ENCODE measurements at regions of chr3 and their contacts with region 1.

Region 1: DNA sequence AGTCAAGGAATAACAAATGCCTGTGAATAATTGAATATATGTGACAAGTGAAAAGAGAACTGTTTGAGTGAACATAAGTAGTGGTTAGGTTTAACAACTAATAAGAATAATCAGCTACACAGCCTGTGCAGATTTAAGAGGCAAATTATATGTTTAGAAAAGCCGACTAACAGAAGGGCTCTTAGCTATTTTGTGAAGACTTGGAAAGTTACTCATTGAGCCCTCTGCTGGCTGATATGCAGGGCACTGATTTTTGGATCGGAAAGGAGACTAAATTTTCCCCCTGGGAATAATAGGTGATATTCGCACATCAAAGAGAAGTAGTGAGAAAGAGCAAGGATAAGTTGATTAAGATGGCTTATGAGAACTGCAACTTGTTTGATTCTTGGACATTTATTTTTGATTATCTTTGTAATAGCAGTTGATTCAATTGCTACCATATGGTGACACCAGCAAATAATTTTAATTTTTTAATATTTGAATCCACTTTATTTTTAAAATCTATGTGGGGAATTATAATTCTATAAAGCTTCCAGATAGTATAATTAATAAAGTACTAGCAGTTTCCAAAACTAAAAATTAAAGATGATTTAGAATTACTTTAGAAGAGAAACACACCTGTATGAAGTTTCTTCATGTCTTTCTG is 156.2 kb downstream of the NLGN1 start:
- DNase-seq: peak; percentile 31
- H3K4me3 Mint-ChIP-seq: no peak overlapping the region
- H3K27ac Mint-ChIP-seq: no peak overlapping the region
- H3K4me1 Mint-ChIP-seq: no peaks in the 10 kb centered on the region
- H3K27me3 Mint-ChIP-seq: no peaks in the 10 kb centered on the region
- CTCF ChIP-seq: peak; percentile 85

Region 2: DNA sequence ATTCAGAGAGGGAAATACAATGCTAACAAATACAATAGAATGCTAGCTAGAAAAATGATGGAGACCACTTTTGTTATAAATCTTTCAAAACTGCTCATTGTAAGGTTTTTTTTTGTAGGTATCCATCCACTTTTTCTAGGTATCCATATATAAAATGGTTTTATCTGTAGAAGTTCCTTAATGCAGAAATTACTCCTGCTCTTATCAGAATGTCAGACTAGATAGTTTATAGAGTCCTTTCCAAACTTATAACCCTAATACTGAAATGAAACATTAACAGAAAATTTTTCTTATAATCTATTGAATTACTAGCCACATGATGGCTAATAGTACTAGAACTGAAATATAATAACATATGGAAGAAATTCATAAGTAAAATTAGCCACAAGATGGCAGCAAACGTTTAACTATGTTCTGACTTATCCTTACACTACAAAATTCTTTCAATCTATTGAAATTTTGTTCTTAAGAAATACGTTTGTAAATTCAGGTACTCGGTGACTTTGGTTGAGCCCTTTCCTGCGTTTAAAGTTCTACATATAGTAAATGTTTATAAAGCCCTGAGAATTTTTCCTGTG is 744.7 kb before region 1 on chr3:
- CTCF ChIA-PET with region 1: no interaction called
- intact Hi-C with region 1: loop called (anchors 2 kb)
- DNase-seq: no peak
- H3K4me3 Mint-ChIP-seq: no peak overlapping the region
- H3K27ac Mint-ChIP-seq: no peak overlapping the region
- H3K4me1 Mint-ChIP-seq: no peaks in the 10 kb centered on the region
- H3K27me3 Mint-ChIP-seq: no peaks in the 10 kb centered on the region
- CTCF ChIP-seq: peak; percentile 39

Region 3: GRCh38 chr3:173221010-173221409 is 332.7 kb before region 1 on chr3:
- CTCF ChIA-PET with region 1: no interaction called
- intact Hi-C with region 1: loop called (anchors 1 kb)
- DNase-seq: peak; percentile 32
- H3K4me3 Mint-ChIP-seq: no peak overlapping the region
- H3K27ac Mint-ChIP-seq: no peak overlapping the region
- H3K4me1 Mint-ChIP-seq: peaks cover 11% of the 10 kb centered on the region
- H3K27me3 Mint-ChIP-seq: no peaks in the 10 kb centered on the region
- CTCF ChIP-seq: peak; percentile 85

Region 4: DNA sequence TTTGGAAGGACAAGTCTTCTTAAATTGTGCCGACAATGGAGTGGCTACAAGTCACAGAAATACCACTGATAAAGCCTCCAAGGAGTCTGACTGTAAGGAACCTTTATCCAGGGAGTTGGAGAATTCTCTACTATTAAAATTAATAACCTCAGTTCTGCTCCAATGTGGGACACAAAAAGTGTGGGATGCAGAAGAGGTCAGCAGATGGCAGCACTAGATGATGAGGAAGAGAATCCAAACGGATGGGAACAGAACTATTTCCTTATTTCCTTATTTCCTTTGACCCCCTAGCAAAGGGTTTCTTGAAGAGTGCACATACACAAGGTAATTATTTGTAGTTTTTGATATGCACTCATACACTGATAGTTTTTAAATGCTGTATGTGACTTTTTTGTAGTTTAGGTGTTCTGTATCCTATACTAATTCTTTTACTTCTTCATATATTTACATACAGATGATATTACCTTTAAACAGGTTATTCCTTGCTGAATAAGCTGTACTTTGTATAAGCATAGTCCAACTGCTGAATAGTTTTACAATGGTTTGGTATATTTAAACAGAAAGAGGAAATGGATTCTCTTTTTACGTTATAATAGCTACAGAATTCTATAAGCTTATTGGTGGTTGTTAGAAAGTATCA is 181.8 kb before region 1 on chr3:
- CTCF ChIA-PET with region 1: interaction called, 3 read pairs
- intact Hi-C with region 1: loop called (anchors 1 kb)
- DNase-seq: peak; percentile 66
- H3K4me3 Mint-ChIP-seq: no peak overlapping the region
- H3K27ac Mint-ChIP-seq: no peak overlapping the region
- H3K4me1 Mint-ChIP-seq: no peaks in the 10 kb centered on the region
- H3K27me3 Mint-ChIP-seq: no peaks in the 10 kb centered on the region
- CTCF ChIP-seq: peak; percentile 68

Region 5: DNA sequence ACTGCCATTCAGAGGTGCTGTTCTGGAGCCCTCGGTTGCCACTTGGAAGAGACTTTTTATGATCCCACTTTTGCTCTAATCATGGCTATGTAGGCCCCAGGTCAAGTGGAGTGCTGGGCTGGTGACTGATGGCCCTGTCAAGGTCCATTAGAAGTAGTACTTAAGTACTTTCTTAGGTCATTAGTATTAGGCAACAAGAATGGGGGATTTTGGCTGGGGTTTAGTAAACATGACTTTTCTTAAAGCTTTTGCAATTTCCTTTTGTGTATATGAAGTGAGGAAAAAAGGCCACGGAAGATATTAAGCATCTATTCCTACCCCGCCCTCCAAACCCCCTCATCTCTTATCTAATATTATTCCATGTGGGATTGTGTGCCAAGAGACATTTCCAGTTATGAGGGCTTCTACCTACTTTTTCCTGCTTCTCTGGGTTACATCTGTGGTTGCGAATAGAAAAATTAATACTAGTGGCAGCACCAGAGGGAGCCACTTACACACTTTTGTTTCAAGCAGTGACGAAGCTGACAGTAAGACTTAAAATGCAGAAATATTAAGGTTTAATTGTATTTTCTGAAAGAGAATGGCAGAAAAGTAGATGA is 142.3 kb before region 1 on chr3:
- CTCF ChIA-PET with region 1: interaction called, 5 read pairs
- intact Hi-C with region 1: loop called (anchors 1 kb)
- DNase-seq: peak; percentile 52
- H3K4me3 Mint-ChIP-seq: no peak overlapping the region
- H3K27ac Mint-ChIP-seq: no peak overlapping the region
- H3K4me1 Mint-ChIP-seq: no peaks in the 10 kb centered on the region
- H3K27me3 Mint-ChIP-seq: no peaks in the 10 kb centered on the region
- CTCF ChIP-seq: peak; percentile 64

Region 6: GRCh38 chr3:173586166-173586565 is 32.4 kb after region 1 on chr3:
- CTCF ChIA-PET with region 1: no interaction called
- intact Hi-C with region 1: no loop called
- DNase-seq: no peak
- H3K4me3 Mint-ChIP-seq: no peak overlapping the region
- H3K27ac Mint-ChIP-seq: no peak overlapping the region
- H3K4me1 Mint-ChIP-seq: peaks cover 19% of the 10 kb centered on the region
- H3K27me3 Mint-ChIP-seq: no peaks in the 10 kb centered on the region
- CTCF ChIP-seq: no peak